ENCODE measurements at regions of chr12 and their contacts with region 1.

Region 1: GRCh38 chr12:79674629-79675028 is 16.1 kb downstream of the PAWR start:
- DNase-seq: no peak
- ATAC-seq: no peak
- H3K4me3 ChIP-seq: no peak overlapping the region
- H3K4me3 Mint-ChIP-seq: no peak overlapping the region
- H3K27ac ChIP-seq: no peak overlapping the region
- H3K27ac Mint-ChIP-seq: no peak overlapping the region
- H3K4me1 ChIP-seq: no peaks in the 10 kb centered on the region
- H3K4me1 Mint-ChIP-seq: no peaks in the 10 kb centered on the region
- H3K27me3 ChIP-seq: no peaks in the 10 kb centered on the region
- H3K27me3 Mint-ChIP-seq: peaks cover 0 to 8% of the 10 kb centered on the region in 2 donors

Region 2: GRCh38 chr12:79662046-79662811 is 12.4 kb before region 1 on chr12:
- CTCF ChIA-PET with region 1: interaction called in 1 of 2 experiments, 12 read pairs
- POLR2A ChIA-PET with region 1: no interaction called
- DNase-seq: no peak
- ATAC-seq: no peak
- H3K4me3 ChIP-seq: no peak overlapping the region
- H3K4me3 Mint-ChIP-seq: no peak overlapping the region
- H3K27ac ChIP-seq: no peak overlapping the region
- H3K27ac Mint-ChIP-seq: no peak overlapping the region
- H3K4me1 ChIP-seq: no peaks in the 10 kb centered on the region
- H3K4me1 Mint-ChIP-seq: peaks cover 0 to 6% (median 0%) of the 10 kb centered on the region in 3 donors
- H3K27me3 ChIP-seq: no peaks in the 10 kb centered on the region
- H3K27me3 Mint-ChIP-seq: no peaks in the 10 kb centered on the region

Measured in T-cell (primary cell).